Activated CD4-positive, alpha-beta T cell treated with anti-CD3 and anti-CD28 coated beads, Interleukin-2, amount 10 ng/mL, durations not matched to agents 7 days and 5 days (primary cell): ENCODE measurements at regions of chr16 and their contacts with region 1.

Region 1: GRCh38 chr16:78778101-78779004 is 678.9 kb downstream of the WWOX start:
- DNase-seq: peak; percentile 45
- H3K4me3 Mint-ChIP-seq: peak overlapping the region; percentile 20
- H3K27ac Mint-ChIP-seq: peak overlapping the region; percentile 92
- H3K4me1 Mint-ChIP-seq: peaks cover 57% of the 10 kb centered on the region
- H3K27me3 Mint-ChIP-seq: no peaks in the 10 kb centered on the region

Region 2: DNA sequence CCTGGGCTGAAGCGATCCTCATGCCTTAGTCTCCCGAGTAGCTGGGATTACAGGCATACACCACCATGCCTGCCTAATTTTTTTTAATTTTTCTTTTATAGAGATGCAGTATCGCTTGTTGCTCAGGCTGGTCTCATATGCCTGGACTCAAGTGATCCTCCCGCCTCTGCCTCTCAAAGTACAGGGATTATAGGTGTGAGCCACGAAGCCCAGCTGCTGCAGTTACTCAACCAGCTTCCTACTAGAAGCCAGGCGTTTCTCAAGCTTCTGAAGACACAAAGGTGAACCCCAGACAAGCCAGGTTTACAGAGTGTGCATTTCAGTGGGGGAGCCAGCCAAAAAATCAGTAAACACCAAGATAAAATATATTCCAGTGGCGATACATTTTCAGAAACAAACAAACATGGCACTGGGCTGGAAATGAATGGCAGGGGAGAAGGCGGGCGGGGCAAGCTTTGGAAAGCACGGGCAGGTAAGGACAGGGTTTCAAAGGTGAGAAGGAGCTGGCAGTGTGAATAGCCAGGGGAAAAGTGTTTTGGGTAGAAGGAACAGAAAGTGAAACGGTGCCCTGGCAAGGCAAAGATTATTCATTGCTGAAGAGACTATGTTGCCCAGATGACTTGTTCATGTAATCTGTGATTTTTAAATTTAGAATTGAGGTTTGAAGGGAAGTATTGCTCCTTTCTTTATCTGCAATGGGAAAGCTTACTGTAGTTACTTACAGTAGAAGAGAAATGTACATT is 207.8 kb before region 1 on chr16:
- CTCF ChIA-PET with region 1: no interaction called
- POLR2A ChIA-PET with region 1: no interaction called
- DNase-seq: no peak
- H3K4me3 Mint-ChIP-seq: no peak overlapping the region
- H3K27ac Mint-ChIP-seq: no peak overlapping the region
- H3K4me1 Mint-ChIP-seq: peaks cover 21% of the 10 kb centered on the region
- H3K27me3 Mint-ChIP-seq: no peaks in the 10 kb centered on the region

Region 3: GRCh38 chr16:78813661-78814311 is 35.4 kb after region 1 on chr16:
- CTCF ChIA-PET with region 1: no interaction called
- POLR2A ChIA-PET with region 1: no interaction called
- DNase-seq: no peak
- H3K4me3 Mint-ChIP-seq: no peak overlapping the region
- H3K27ac Mint-ChIP-seq: no peak overlapping the region
- H3K4me1 Mint-ChIP-seq: no peaks in the 10 kb centered on the region
- H3K27me3 Mint-ChIP-seq: no peaks in the 10 kb centered on the region

Region 4: DNA sequence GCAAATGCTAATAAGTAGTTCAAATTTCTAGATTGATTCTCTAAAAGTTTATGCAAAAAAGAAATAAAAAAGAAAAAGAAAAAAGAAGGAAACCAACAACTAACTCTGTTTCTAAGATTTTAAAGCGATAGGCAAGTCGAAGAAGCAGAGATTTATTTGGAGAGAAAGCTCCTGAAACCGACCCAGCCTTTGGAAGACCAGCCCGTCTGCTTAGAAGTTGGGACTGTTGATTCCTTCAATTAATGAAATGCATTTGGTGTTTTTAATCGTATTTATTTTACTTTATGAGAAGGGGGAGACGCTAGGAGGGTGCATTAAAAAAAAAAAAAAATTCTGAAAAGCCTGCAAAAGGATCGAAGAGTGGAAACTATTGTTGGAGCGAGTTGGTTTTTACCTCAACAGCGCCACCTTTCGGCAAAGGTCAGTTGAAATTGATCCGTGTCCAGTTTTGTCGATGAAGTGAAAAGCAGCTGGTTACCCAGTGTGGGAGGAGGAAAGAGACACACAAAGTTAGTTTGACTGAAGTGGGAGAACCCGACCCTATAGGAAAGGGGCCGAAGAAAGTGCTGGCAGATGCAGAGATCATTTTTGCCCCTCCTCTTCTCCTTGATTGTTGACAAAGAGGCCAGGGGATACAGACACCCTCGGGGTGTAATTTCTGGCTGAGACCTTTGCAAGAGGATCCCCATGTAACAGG is 823.7 kb after region 1 on chr16:
- CTCF ChIA-PET with region 1: interaction called, 8 read pairs
- POLR2A ChIA-PET with region 1: interaction called, 10 read pairs
- DNase-seq: peak; percentile 90
- H3K4me3 Mint-ChIP-seq: peak overlapping the region; percentile 90
- H3K27ac Mint-ChIP-seq: peak overlapping the region; percentile 95
- H3K4me1 Mint-ChIP-seq: peaks cover 35% of the 10 kb centered on the region
- H3K27me3 Mint-ChIP-seq: peaks cover 48% of the 10 kb centered on the region